Activated B cell treated with CpG ODN at 0.5 μM for 24 hours (primary cell): ENCODE measurements at regions of chr3 and their contacts with region 1.

Region 1: GRCh38 chr3:195337747-195338146 is 66.8 kb upstream of the XXYLT1 start:
- DNase-seq: no peak
- ATAC-seq: no peak
- H3K4me3 Mint-ChIP-seq: no peak overlapping the region
- H3K27ac Mint-ChIP-seq: no peak overlapping the region
- H3K4me1 Mint-ChIP-seq: no peaks in the 10 kb centered on the region
- H3K27me3 Mint-ChIP-seq: no peaks in the 10 kb centered on the region
- CTCF ChIP-seq: no peak

Region 2: GRCh38 chr3:195297446-195297845 is 40.3 kb before region 1 on chr3:
- CTCF ChIA-PET with region 1: no interaction called
- POLR2A ChIA-PET with region 1: no interaction called
- intact Hi-C with region 1: loop called (anchors 5 kb)
- DNase-seq: no peak
- ATAC-seq: no peak
- H3K4me3 Mint-ChIP-seq: no peak overlapping the region
- H3K27ac Mint-ChIP-seq: no peak overlapping the region
- H3K4me1 Mint-ChIP-seq: no peaks in the 10 kb centered on the region
- H3K27me3 Mint-ChIP-seq: no peaks in the 10 kb centered on the region
- CTCF ChIP-seq: no peak

Region 3: GRCh38 chr3:195384952-195385351 is 47.2 kb after region 1 on chr3:
- CTCF ChIA-PET with region 1: interaction called, 3 read pairs
- POLR2A ChIA-PET with region 1: no interaction called
- intact Hi-C with region 1: loop called (anchors 5 kb)
- DNase-seq: no peak
- ATAC-seq: no peak
- H3K4me3 Mint-ChIP-seq: no peak overlapping the region
- H3K27ac Mint-ChIP-seq: no peak overlapping the region
- H3K4me1 Mint-ChIP-seq: peaks cover 16% of the 10 kb centered on the region
- H3K27me3 Mint-ChIP-seq: no peaks in the 10 kb centered on the region
- CTCF ChIP-seq: no peak

Region 4: DNA sequence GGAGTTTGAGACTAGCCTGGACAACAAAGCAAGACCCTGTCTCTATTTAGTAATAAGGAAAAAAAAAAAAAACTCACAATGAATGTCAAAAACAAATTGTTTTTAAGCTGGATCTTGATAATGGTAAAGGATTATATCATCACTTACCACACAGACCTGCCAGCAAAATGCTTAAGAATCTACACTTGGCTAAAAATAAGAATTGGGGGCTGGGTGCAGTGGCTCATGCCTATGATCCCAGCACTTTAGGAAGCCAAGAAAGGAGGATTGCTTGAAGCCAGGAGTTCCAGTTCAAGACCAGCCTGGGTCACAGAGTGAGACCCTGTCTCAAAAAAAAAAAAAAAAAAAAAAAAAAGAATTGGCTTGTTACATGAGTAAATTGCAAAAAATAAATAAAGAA is 74.1 kb after region 1 on chr3:
- CTCF ChIA-PET with region 1: no interaction called
- POLR2A ChIA-PET with region 1: no interaction called
- intact Hi-C with region 1: no loop called
- DNase-seq: no peak
- ATAC-seq: no peak
- H3K4me3 Mint-ChIP-seq: no peak overlapping the region
- H3K27ac Mint-ChIP-seq: no peak overlapping the region
- H3K4me1 Mint-ChIP-seq: peaks cover 59% of the 10 kb centered on the region
- H3K27me3 Mint-ChIP-seq: no peaks in the 10 kb centered on the region
- CTCF ChIP-seq: no peak